ENCODE measurements at regions of chr19 and their contacts with region 1.

Region 1: DNA sequence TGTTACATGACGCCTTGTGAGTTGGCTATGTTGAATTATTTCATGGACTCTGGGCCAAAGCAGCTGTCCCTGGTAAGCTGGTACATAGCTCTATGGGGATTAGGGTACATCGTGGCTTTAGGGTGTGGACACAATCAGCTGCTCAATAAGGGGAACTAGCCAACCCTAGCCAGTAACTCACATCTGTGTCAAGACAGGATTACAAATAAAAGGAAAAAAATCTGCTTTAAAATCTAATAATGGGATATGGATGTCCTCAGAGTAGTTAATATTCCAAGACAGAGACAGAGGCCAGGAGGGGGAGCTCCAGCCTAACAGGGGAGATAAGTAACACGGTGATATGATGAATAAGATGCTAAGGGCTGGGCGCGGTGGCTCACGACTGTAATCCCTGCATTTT is 21.1 kb upstream of the ZNF766 start:
- DNase-seq: peak; percentile 74
- ATAC-seq: peak; percentile 54

Region 2: DNA sequence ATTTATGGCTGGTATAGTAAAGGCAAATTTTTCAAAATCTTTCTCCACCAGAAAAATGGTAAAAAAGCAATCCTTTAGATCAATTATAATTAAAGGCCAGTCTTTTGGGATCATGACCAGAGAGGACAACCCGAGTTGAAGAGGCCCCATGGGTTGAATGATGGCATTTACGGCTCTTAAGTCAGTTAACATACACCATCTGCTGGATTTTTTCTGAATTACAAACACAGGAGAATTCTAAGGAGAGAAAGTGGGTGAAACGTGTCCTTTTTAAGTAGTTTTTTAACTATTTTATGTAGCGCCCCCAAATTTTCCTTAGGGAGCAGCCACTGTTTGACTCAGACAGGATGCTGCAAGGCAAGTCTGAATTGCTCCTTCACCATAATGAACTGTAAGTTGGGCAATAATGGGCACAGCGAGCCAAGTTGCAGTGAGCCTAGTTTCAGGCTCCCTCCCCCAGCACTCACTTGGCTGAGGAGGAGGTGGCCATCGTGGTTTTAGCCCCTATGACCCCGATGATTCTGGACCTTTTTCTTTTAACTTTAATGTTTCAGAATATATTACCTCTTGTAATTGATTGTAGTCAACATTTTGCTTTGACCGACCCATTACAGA is 500.2 kb after region 1 on chr19:
- intact Hi-C with region 1: loop called (anchors 2 kb)
- DNase-seq: no peak
- ATAC-seq: no peak

Measured in Right ventricle myocardium inferior (tissue), 1 donor.